ENCODE measurements at regions of chr1 and their contacts with region 1.

Region 1: GRCh38 chr1:84156210-84156621 is 12.1 kb downstream of the PRKACB start:
- DNase-seq: peak; percentile 93
- H3K4me3 Mint-ChIP-seq: no peak overlapping the region
- H3K27ac Mint-ChIP-seq: peak overlapping the region; percentile 20
- H3K4me1 Mint-ChIP-seq: peaks cover 15% of the 10 kb centered on the region
- H3K27me3 Mint-ChIP-seq: no peaks in the 10 kb centered on the region
- CTCF ChIP-seq: no peak

Region 2: DNA sequence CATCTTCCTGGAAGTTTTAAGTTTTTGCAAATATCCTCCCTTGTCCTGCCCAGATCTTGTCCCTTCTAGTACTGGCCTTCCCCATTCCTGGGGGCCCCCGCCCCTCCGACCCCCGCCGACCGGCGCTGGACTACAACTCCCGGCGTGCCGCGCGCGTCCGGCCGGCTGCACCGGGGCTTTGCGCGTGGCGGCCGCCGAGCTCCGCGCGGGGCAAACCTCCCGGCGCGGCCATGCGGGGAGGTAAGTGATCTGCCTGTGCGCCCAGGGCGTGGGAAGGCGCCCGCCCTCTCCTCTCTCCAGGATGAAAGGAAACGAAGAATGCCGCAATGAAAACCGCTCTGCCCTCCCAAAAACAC is 142.1 kb after region 1 on chr1:
- CTCF ChIA-PET with region 1: no interaction called
- POLR2A ChIA-PET with region 1: no interaction called
- intact Hi-C with region 1: loop called (anchors 5 kb)
- DNase-seq: peak; percentile 21
- H3K4me3 Mint-ChIP-seq: peak overlapping the region; percentile 84
- H3K27ac Mint-ChIP-seq: no peak overlapping the region
- H3K4me1 Mint-ChIP-seq: peaks cover 18% of the 10 kb centered on the region
- H3K27me3 Mint-ChIP-seq: no peaks in the 10 kb centered on the region
- CTCF ChIP-seq: no peak

Measured in MCF 10A (cell line).